Cardiac septum (tissue), 1 donor: ENCODE measurements at regions of chr3 and their contacts with region 1.

Region 1: GRCh38 chr3:10319804-10320677 is 871 bp downstream of the SEC13 start:
- DNase-seq: no peak

Region 2: DNA sequence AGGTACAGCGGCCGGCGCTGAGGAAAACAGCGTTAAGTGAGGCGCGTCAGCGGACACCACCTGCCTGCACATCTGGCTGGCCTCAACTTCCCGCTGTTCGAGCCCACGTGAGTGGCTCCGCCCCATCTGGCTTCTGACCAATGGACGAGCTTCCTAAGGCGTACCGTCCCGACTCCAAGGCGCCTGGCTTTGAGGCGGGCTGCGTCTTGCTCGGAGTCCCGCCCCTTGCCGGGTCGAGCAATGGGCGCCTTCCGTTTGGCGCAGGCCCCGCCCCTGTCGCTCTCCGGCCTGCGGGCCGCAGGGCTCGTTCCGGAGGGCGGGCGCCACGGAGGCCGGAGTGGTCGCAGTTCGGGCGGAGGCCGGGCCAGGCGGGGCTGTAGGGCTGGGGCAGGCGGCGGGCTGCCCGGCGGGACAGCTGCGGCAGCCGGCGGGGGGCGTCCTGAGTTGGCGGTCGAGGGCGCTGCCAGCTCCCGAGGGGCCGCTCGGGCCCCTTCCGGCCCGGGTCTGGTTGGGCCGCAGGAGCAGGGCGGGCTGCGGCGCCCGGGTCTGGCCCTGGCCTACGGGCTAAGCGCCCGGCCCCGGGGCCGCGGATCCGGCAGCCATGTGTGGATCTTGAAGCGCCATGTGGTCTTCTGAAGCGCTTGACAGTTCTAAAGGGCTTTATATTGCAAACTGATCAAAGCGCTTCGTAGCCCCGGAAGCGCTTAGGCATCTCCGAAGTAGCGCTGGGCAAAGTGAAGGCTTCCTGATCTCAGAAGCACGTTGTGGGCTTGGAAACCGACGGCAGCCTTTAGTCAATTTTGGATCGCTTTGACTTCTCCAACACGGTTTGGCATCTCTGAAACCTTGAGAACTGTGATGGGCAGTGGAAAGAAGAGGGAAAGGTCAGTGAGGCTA is 71.6 kb before region 1 on chr3 and contains the start of gene TATDN2:
- intact Hi-C with region 1: loop called (anchors 5 kb)
- DNase-seq: peak; percentile 99
- total RNA-seq, gene TATDN2: 19.8 TPM